MCF 10A (cell line): ENCODE measurements at regions of chr22 and their contacts with region 1.

Region 1: DNA sequence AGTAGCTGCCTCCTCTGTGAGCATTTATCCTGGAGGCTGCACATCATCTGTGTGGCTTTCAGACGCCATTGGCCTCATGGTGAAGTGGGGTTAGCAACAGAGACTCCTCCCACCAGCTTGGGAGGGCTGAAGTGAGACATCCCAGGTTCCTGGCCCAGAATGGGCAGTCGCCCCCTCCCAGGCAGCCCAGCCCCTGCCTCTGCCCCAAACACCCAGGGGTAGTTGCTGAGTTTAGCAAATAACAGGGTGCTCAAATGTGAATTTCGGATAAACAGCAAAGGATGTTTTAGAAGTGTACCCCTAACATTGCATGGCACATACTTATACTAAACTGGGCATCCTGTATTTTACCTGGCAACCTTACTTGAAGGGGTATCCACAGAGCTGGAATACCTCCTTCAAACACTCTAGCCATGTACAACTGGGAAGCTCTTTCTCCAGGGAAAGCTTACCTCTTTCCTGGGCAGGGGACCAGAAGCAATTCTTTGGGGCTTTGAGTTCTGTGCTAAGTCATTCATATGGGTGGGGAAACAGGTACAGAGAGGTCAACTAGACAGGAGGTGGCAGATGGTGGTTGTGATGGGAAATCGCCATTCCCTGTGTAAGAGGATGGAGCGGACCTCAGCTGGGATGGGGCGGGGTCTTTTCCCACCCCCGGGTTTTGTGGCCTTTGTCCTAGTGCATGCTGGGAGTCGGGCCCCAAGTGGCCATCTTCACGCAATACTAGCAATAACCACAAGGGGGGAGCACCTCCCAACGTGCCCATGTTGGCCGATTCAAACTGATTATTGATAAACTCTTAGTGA is 19.3 kb downstream of the MTFP1 start:
- DNase-seq: peak; percentile 69
- H3K4me3 Mint-ChIP-seq: no peak overlapping the region
- H3K27ac Mint-ChIP-seq: no peak overlapping the region
- H3K4me1 Mint-ChIP-seq: peaks cover 6% of the 10 kb centered on the region
- H3K27me3 Mint-ChIP-seq: no peaks in the 10 kb centered on the region
- CTCF ChIP-seq: peak; percentile 70

Region 2: DNA sequence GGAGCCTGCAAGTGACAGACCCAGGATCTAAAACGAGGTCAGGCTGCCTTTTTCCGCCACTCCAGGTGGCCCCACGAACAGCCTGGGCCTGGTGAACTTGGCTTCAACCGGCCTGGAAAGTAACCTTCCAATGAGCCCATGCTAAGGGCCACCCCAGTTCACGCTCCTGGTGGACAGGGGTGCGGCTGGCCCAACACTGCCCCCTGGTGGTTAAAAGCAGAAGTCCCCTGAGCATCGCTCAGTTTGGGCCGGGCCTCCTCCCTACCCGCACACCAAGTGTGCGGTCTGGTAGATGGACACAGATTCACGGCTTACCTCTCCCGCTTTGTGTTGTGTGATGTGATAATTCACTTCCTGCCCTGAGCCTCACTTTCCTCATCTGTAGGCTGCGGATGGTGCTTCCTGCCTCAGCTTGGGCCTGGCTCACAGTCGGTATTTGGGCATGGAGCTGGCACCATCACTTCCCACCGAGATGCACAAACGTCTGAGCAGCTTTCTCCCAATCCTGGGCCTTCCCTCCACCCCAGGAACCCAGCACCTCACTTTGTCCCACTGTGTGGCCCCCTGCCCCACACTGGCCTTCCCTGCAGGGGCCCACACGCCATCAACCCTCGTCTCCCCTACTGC is 40.6 kb after region 1 on chr22:
- CTCF ChIA-PET with region 1: interaction called, 58 read pairs
- POLR2A ChIA-PET with region 1: interaction called, 3 read pairs
- intact Hi-C with region 1: loop called (anchors 1 kb)
- DNase-seq: peak; percentile 64
- H3K4me3 Mint-ChIP-seq: no peak overlapping the region
- H3K27ac Mint-ChIP-seq: no peak overlapping the region
- H3K4me1 Mint-ChIP-seq: peaks cover 8% of the 10 kb centered on the region
- H3K27me3 Mint-ChIP-seq: peaks cover 15% of the 10 kb centered on the region
- CTCF ChIP-seq: peak; percentile 96

Region 3: GRCh38 chr22:30591588-30592359 is 146.9 kb after region 1 on chr22 and contains the start of gene PES1:
- CTCF ChIA-PET with region 1: interaction called, 4 read pairs
- POLR2A ChIA-PET with region 1: interaction called, 4 read pairs
- intact Hi-C with region 1: loop called (anchors 1 kb)
- DNase-seq: peak; percentile 97
- H3K4me3 Mint-ChIP-seq: no peak within 1 kb of the TSS
- H3K27ac Mint-ChIP-seq: no peak within 1 kb of the TSS
- H3K4me1 Mint-ChIP-seq: no peaks in the 10 kb centered on the region
- H3K27me3 Mint-ChIP-seq: no peaks in the 10 kb centered on the region
- CTCF ChIP-seq: no peak
- total RNA-seq, gene PES1: 114 and 145 TPM in 2 replicates

Region 4: DNA sequence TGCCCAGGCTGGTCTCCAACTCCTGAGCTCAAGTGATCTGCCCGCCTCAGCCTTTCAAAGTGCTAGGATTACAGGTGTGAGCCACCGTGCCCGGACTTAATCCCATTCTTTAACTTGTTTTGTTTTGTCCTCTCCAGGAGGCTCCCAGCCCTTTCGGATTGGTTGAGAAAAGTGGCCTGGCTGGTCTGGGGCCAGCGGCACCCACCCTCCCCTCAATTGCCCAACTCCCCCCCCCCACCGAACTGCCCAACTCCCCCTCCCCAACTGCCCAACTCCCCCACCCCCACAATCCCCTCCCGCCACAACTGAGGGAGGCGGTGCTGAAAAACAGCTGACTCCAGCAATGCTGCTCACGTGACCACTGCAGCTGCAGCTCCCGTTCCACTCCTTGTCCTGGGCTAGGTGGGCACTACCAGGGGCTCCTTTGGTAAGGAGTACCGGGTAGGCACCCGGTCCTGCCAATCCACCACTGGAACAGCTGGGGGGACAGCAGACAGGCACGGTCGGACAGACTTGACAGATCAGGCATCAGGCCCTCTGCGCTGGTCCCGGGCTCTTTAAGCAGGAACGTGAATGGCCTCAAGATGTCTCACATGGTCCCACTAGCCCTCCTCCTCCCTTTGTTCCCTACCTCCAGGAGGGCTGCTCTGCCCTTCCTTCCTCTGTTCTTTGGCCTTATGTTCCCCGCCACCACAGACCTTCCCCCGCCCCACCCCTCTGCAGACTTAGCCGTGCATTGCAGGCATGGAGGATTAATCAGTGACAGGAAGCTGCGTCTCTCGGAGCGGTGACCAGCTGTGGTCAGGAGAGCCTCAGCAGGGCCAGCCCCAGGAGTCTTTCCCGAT is 161.8 kb after region 1 on chr22 and contains the start of gene TCN2:
- CTCF ChIA-PET with region 1: interaction called, 6 read pairs
- POLR2A ChIA-PET with region 1: no interaction called
- intact Hi-C with region 1: loop called (anchors 1 kb)
- DNase-seq: peak; percentile 35
- H3K4me3 Mint-ChIP-seq: peak within 1 kb of the TSS; percentile 80
- H3K27ac Mint-ChIP-seq: peak within 1 kb of the TSS; percentile 58
- H3K4me1 Mint-ChIP-seq: peaks cover 9% of the 10 kb centered on the region
- H3K27me3 Mint-ChIP-seq: no peaks in the 10 kb centered on the region
- CTCF ChIP-seq: no peak
- total RNA-seq, gene TCN2: 1.2 and 1.4 TPM in 2 replicates